ENCODE measurements at regions of chr1 and their contacts with region 1.

Region 1: DNA sequence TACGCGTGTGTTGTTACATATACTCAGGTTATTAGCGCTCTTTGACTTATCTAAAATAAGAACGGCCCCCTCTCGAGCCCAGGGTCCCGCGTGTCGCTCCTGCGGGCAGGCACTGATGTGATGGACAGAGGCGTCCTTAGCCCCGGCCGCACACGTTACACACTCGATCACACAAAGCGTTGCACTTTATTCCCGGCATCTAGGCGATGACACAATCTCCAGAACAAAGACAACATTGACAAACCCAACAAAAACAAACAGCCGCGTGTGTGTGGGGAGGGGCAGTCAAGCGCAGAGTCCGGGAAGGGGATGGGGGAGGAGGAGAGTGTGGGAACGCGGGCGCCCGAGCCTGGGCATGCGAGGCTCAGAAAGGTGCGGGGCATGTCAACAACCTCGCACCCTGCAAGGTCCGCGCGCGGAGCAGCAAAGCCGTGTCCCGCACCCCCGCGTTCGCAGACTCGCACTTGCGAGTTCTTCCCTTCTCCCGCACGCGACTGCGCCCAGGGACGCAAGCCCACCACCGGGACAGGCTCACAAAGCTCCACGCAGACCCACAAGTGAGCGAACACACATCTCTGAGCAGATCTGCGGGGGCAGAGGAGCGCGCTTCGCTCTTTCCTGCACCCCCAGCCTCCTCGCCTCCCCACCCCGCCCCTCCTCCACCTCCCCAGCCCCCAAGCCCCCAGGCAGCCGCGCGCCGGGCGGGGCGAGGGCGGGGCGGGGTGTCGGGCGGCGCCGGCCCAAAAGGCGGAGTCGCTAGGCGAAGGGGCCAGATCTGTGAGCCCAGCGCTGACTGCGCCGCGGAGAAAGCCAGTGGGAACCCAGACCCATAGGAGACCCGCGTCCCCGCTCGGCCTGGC is at the start of gene EFNA1:
- DNase-seq: peak; percentile 69 to 97 (median 86)

Region 2: GRCh38 chr1:155091071-155091709 is 36.1 kb before region 1 on chr1:
- intact Hi-C with region 1: loop called (anchors 5 kb)
- DNase-seq: peak; percentile 68 to 96 (median 82)

Region 3: GRCh38 chr1:155208541-155209311 is 81.4 kb after region 1 on chr1 and contains the start of gene MTX1:
- intact Hi-C with region 1: no loop called
- DNase-seq: peak; percentile 80 to 98 (median 86)

Region 4: DNA sequence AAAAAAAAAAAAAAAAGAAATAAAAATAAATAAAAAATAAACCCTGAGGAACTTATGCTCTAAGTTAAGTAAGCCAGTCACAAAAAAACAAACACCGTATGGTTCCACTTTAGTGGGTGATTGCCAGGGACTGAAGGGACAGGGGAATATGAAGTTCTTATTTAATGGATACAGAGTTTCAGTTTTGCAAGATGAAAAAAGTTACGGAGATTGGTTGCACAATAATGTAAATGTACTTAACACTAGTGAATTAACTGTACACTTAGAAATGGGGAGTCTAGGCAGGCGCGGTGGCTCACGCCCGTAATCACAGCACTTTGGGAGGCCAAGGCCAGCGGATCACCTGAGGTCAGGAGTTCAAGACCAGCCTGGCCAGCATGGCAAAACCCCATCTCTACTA is 323.9 kb after region 1 on chr1:
- intact Hi-C with region 1: no loop called
- DNase-seq: no peak